B cell (primary cell): ENCODE measurements at regions of chr18 and their contacts with region 1.

Region 1: GRCh38 chr18:74116633-74117554 is 30.7 kb downstream of the FBXO15 start:
- DNase-seq: peak; percentile 44
- ATAC-seq: peak; percentile 36
- H3K4me3 ChIP-seq: no peak overlapping the region
- H3K4me3 Mint-ChIP-seq: no peak overlapping the region
- H3K27ac ChIP-seq: no peak overlapping the region
- H3K27ac Mint-ChIP-seq: no peak overlapping the region
- H3K4me1 ChIP-seq: no peaks in the 10 kb centered on the region
- H3K4me1 Mint-ChIP-seq: peaks cover 8% of the 10 kb centered on the region
- H3K27me3 ChIP-seq: no peaks in the 10 kb centered on the region
- H3K27me3 Mint-ChIP-seq: peaks cover 10% of the 10 kb centered on the region
- CTCF ChIP-seq: peak; percentile 56

Region 2: GRCh38 chr18:72762515-72763122 is 1354.3 kb before region 1 on chr18:
- CTCF ChIA-PET with region 1: interaction called, 3 read pairs
- POLR2A ChIA-PET with region 1: no interaction called
- intact Hi-C with region 1: loop called (anchors 10 kb)
- DNase-seq: peak; percentile 73
- ATAC-seq: peak; percentile 58
- H3K4me3 ChIP-seq: no peak overlapping the region
- H3K4me3 Mint-ChIP-seq: no peak overlapping the region
- H3K27ac ChIP-seq: no peak overlapping the region
- H3K27ac Mint-ChIP-seq: no peak overlapping the region
- H3K4me1 ChIP-seq: no peaks in the 10 kb centered on the region
- H3K4me1 Mint-ChIP-seq: no peaks in the 10 kb centered on the region
- H3K27me3 ChIP-seq: no peaks in the 10 kb centered on the region
- H3K27me3 Mint-ChIP-seq: no peaks in the 10 kb centered on the region
- CTCF ChIP-seq: peak; percentile 91

Region 3: DNA sequence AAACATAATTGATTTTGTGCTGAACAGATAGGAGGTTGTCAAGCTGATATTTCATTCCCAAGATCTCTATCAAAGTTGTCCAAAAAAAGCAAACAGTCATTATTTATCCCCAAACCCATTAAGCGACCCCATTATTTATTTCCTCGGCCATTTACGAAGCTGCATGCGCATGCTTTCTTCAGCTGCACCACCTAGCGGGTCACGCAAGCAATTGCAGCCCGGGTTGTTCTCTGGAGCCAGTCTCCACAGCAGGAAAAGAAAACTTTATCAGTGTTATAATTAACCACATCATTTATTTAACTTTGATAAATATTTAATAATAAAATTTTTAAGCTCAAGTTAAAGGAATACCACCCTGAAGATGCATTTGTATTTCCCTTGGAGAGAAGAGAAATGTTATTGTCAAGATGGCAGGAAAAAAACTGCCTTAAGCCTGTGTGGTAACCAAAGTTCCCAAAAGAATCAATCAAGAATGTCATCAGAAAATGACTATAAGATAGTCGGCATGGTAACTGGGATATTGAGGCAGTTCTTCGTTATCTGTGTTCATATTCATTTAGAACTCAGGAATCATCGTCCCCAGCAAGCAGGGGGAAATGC is 274.0 kb before region 1 on chr18:
- CTCF ChIA-PET with region 1: interaction called, 3 read pairs
- POLR2A ChIA-PET with region 1: no interaction called
- intact Hi-C with region 1: loop called (anchors 10 kb)
- DNase-seq: peak; percentile 57
- ATAC-seq: peak; percentile 71
- H3K4me3 ChIP-seq: peak overlapping the region in 1 of 5 experiments; percentile 34
- H3K4me3 Mint-ChIP-seq: peak overlapping the region; percentile 57
- H3K27ac ChIP-seq: no peak overlapping the region
- H3K27ac Mint-ChIP-seq: no peak overlapping the region
- H3K4me1 ChIP-seq: no peaks in the 10 kb centered on the region
- H3K4me1 Mint-ChIP-seq: peaks cover 3% of the 10 kb centered on the region
- H3K27me3 ChIP-seq: peaks cover 0 to 4% (median 0%) of the 10 kb centered on the region in 4 experiments
- H3K27me3 Mint-ChIP-seq: peaks cover 5% of the 10 kb centered on the region
- CTCF ChIP-seq: peak; percentile 98

Region 4: GRCh38 chr18:73959352-73959751 is 157.5 kb before region 1 on chr18:
- CTCF ChIA-PET with region 1: no interaction called
- POLR2A ChIA-PET with region 1: no interaction called
- intact Hi-C with region 1: loop called (anchors 10 kb)
- DNase-seq: no peak
- ATAC-seq: no peak
- H3K4me3 ChIP-seq: no peak overlapping the region
- H3K4me3 Mint-ChIP-seq: no peak overlapping the region
- H3K27ac ChIP-seq: no peak overlapping the region
- H3K27ac Mint-ChIP-seq: no peak overlapping the region
- H3K4me1 ChIP-seq: peaks cover 17 to 24% of the 10 kb centered on the region in 2 donors
- H3K4me1 Mint-ChIP-seq: peaks cover 31% of the 10 kb centered on the region
- H3K27me3 ChIP-seq: no peaks in the 10 kb centered on the region
- H3K27me3 Mint-ChIP-seq: peaks cover 8% of the 10 kb centered on the region
- CTCF ChIP-seq: no peak

Region 5: GRCh38 chr18:74040459-74041332 is 76.2 kb before region 1 on chr18:
- CTCF ChIA-PET with region 1: interaction called, 3 read pairs
- POLR2A ChIA-PET with region 1: no interaction called
- intact Hi-C with region 1: loop called (anchors 1 kb)
- DNase-seq: peak; percentile 62
- ATAC-seq: peak; percentile 79
- H3K4me3 ChIP-seq: no peak overlapping the region
- H3K4me3 Mint-ChIP-seq: no peak overlapping the region
- H3K27ac ChIP-seq: no peak overlapping the region
- H3K27ac Mint-ChIP-seq: no peak overlapping the region
- H3K4me1 ChIP-seq: peaks cover 18% of the 10 kb centered on the region in 2 donors
- H3K4me1 Mint-ChIP-seq: peaks cover 20% of the 10 kb centered on the region
- H3K27me3 ChIP-seq: no peaks in the 10 kb centered on the region
- H3K27me3 Mint-ChIP-seq: no peaks in the 10 kb centered on the region
- CTCF ChIP-seq: peak; percentile 66

Region 6: DNA sequence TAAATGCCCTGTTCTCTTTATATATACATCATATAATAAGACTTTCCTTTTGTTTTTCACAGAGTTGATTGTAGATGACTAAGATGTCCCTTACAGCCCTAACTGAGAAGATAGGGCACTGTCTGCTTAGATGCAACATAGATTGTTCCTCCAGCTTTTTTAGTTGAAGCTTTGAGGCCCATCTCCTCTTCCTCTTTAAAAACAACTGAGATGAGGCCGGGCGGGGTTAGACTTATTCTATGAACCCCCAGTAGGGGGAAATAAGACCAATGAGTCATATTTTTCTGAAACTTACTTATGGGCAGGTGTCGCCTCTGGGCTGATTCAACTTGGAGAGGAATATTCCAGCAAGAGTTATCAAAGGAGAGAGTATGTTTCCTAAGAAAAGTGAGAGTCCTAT is 53.9 kb before region 1 on chr18:
- CTCF ChIA-PET with region 1: interaction called, 4 read pairs
- POLR2A ChIA-PET with region 1: no interaction called
- intact Hi-C with region 1: loop called (anchors 5 kb)
- DNase-seq: peak; percentile 65
- ATAC-seq: peak; percentile 53
- H3K4me3 ChIP-seq: peak overlapping the region in 1 of 5 experiments; percentile 6
- H3K4me3 Mint-ChIP-seq: peak overlapping the region; percentile 29
- H3K27ac ChIP-seq: peak overlapping the region; percentile 72 to 77
- H3K27ac Mint-ChIP-seq: peak overlapping the region; percentile 94
- H3K4me1 ChIP-seq: peaks cover 53 to 59% of the 10 kb centered on the region in 2 donors
- H3K4me1 Mint-ChIP-seq: peaks cover 62% of the 10 kb centered on the region
- H3K27me3 ChIP-seq: no peaks in the 10 kb centered on the region
- H3K27me3 Mint-ChIP-seq: no peaks in the 10 kb centered on the region
- CTCF ChIP-seq: no peak

Region 7: DNA sequence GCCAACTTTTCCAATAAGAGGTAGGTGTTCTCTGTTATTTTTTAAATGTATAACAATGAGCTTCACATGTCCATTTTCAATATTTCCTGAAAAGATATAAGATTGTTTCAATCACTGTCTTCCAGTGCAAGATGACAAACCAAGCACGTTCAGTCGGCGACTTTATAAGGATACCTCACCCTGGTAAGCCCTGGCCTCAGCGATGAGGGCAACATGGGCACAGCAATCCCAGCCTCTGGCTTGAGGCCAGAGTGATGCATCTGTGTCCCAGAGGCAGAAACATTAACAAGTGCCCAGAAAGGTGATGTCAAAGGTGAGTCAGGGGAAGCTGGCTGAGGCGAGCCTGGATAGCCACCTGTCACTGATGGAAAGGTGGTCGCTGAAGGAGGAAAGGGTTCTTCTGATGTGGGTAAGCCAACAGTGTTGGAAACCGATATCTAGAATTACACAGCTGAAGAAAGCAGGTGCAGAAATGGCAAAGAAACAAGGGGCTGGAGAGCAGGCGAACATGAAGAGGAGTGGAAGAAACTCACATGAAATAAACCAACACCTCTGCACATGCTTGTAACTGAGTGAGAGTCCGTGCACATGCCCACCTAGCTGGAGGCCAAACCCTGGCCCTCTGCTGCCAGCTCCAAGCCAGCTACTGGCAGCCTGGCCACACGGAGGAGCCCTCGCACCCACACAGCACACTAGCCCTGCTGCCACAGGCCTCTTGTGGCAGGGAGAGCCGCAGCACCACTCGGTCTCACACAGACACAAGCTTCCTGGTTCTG is 34.7 kb before region 1 on chr18:
- CTCF ChIA-PET with region 1: interaction called, 20 read pairs
- POLR2A ChIA-PET with region 1: no interaction called
- intact Hi-C with region 1: loop called (anchors 2 kb)
- DNase-seq: peak; percentile 71
- ATAC-seq: peak; percentile 97
- H3K4me3 ChIP-seq: peak overlapping the region in 3 of 5 experiments; percentile 8 to 17 (median 11)
- H3K4me3 Mint-ChIP-seq: peak overlapping the region; percentile 69
- H3K27ac ChIP-seq: peak overlapping the region; percentile 65 to 68
- H3K27ac Mint-ChIP-seq: peak overlapping the region; percentile 93
- H3K4me1 ChIP-seq: peaks cover 15% of the 10 kb centered on the region in 2 donors
- H3K4me1 Mint-ChIP-seq: peaks cover 23% of the 10 kb centered on the region
- H3K27me3 ChIP-seq: no peaks in the 10 kb centered on the region
- H3K27me3 Mint-ChIP-seq: peaks cover 6% of the 10 kb centered on the region
- CTCF ChIP-seq: peak; percentile 27